Ovary (tissue), 10 donors: ENCODE measurements at regions of chr15 and their contacts with region 1.

Region 1: DNA sequence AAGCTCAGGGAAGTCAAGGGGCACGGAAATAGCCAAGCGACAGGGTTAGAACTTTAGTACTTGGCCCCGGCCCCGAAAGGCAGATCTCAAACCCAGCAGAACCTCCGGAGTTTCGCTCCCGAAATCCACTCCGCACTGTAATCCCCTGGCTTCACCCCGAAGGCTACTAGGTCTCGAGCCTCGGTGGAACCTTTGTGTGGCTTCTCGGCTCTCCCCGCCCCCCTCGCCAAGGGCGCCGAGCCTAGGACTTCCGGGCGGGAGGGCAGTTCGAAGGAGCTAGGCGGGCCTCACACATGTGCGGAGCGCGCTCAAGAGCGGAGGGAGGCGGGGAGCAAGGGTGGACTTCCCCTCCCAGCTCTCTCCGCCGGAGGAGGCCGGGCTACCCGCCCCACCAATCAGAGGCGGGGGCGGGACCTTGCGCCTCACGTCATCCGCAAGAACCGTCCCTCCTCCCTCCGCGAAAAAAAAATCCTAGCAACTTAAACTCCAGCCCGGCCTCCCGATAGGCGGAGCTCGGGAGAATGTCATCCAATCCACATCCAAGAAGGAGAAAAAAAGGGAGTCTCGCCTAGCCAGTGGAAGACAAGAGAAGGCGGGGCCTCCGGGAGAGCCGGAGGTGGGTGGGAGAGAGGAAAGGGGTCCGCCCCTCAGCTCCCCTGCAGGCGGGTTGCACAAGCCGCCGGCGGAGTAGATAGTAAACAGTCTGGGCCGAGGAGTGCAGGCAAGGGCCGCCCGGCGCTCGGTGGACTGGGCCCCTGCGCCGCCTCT is 2.4 kb upstream of the SIN3A start:
- DNase-seq: peak; percentile 97 to 99 (median 98)
- H3K4me3 ChIP-seq: peak overlapping the region; percentile 76
- H3K27ac ChIP-seq: peak overlapping the region; percentile 81 to 89
- H3K4me1 ChIP-seq: no peaks in the 10 kb centered on the region
- H3K27me3 ChIP-seq: no peaks in the 10 kb centered on the region
- CTCF ChIP-seq: no peak
- EP300 ChIP-seq: peak; percentile 31
- POLR2A ChIP-seq: peak; percentile 81

Region 2: GRCh38 chr15:75493732-75494131 is 39.8 kb after region 1 on chr15:
- intact Hi-C with region 1: no loop called
- DNase-seq: no peak
- H3K4me3 ChIP-seq: no peak overlapping the region
- H3K27ac ChIP-seq: no peak overlapping the region
- H3K4me1 ChIP-seq: no peaks in the 10 kb centered on the region
- H3K27me3 ChIP-seq: no peaks in the 10 kb centered on the region
- CTCF ChIP-seq: no peak
- EP300 ChIP-seq: no peak
- POLR2A ChIP-seq: no peak

Region 3: DNA sequence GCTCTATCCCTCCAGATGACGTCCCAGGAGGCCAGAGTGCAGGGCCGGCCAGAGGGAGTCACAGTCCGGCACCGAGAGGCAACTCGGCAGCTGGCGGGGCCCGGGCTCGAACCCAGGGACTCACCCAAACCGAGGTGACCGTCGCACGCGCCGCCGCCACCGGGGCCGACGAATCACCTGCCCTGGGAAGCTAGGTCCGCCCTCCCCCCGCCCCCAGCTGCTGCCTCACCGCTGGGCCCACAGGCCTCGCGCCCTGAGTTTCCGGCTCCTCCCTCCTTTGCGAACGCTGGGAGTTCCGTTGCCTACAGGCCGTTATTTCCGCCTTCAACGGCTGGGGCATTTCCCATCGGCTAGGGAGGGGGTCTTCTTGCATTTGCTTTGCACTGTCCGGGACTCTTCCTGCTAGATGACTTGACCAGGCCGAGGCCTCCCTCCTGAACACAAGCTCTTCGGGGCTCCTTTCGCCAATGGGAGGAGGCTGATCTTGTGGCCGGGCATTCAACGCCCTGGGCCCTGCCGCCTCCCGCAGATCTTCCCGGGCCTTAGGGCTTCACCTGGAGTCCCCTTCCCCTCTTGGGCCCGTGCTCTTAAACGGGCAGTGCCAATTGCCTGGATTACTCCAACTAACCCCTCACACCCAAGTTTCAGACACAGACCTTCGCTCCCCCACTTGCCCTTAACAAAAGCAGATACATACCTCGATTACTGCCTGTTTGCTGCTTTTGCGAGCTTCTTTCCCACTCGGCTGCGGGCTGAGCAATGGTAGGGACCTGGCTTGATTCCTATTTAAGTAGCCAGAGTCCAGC is 171.9 kb after region 1 on chr15 and contains the start of gene SNUPN:
- intact Hi-C with region 1: loop called in 1 of 4 experiments (anchors 5 kb)
- DNase-seq: peak; percentile 92 to 95 (median 93)
- H3K4me3 ChIP-seq: peak within 1 kb of the TSS; percentile 88
- H3K27ac ChIP-seq: peak within 1 kb of the TSS; percentile 75 to 94
- H3K4me1 ChIP-seq: peaks cover 7% of the 10 kb centered on the region
- H3K27me3 ChIP-seq: no peaks in the 10 kb centered on the region
- CTCF ChIP-seq: no peak
- EP300 ChIP-seq: peak; percentile 20
- POLR2A ChIP-seq: peak; percentile 42
- total RNA-seq, gene SNUPN: 20.4 to 34.5 (median 27.5) TPM

Region 4: DNA sequence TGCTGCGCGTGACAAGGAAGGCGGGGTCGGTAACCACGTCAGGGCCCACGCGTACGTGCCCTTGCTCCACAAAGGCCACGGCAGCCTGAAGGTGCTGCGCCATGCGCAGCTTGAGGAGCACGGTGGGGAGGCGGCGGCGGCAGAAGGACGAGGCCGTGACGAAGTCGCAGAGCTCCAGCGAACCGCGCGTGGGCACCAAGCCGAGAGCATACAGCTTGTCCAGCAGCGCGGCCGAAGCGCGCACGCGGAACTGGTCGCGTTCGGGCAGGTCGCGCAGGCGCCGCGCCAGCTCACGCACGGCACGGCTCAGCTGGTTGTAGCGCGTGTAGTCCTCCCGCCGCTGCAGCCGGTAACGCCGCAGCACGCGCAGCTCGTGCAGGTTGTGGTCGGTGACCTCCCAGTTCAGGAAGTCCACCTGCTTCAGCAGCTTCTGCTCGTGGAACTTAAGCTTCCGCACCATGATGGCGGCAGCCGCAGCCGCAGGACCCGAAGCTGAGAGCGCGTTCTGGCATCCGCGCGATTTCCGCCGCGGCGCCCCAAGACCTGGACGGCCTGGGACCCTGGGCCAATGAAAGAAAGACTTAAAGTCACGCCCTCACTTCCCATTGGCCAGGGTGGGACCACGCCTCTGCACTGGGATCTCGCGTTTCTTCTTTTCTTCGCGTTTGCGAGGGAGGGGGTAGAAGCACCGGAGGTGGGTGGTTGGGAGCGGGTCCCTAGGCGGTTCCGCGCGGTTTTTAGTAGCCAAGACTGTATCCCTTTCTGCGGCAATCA is 186.0 kb after region 1 on chr15 and contains the start of gene IMP3:
- intact Hi-C with region 1: loop called in 1 of 4 experiments (anchors 10 kb)
- DNase-seq: peak; percentile 91 to 95 (median 92)
- H3K4me3 ChIP-seq: peak within 1 kb of the TSS; percentile 95
- H3K27ac ChIP-seq: peak within 1 kb of the TSS in 1 of 2 donors; percentile 82
- H3K4me1 ChIP-seq: peaks cover 4% of the 10 kb centered on the region
- H3K27me3 ChIP-seq: no peaks in the 10 kb centered on the region
- CTCF ChIP-seq: no peak
- EP300 ChIP-seq: no peak
- POLR2A ChIP-seq: peak; percentile 87
- total RNA-seq, gene IMP3: 45.1 to 106 (median 59.6) TPM